Activated CD4-positive, alpha-beta memory T cell treated with anti-CD3 and anti-CD28 coated beads for 36 hours (primary cell): ENCODE measurements at regions of chr18 and their contacts with region 1.

Region 1: GRCh38 chr18:76803814-76804213 is 18.5 kb upstream of the ZNF236 start:
- DNase-seq: peak; percentile 85
- H3K4me3 Mint-ChIP-seq: no peak overlapping the region
- H3K27ac Mint-ChIP-seq: no peak overlapping the region
- H3K4me1 Mint-ChIP-seq: peaks cover 11% of the 10 kb centered on the region
- H3K27me3 Mint-ChIP-seq: peaks cover 7% of the 10 kb centered on the region

Region 2: DNA sequence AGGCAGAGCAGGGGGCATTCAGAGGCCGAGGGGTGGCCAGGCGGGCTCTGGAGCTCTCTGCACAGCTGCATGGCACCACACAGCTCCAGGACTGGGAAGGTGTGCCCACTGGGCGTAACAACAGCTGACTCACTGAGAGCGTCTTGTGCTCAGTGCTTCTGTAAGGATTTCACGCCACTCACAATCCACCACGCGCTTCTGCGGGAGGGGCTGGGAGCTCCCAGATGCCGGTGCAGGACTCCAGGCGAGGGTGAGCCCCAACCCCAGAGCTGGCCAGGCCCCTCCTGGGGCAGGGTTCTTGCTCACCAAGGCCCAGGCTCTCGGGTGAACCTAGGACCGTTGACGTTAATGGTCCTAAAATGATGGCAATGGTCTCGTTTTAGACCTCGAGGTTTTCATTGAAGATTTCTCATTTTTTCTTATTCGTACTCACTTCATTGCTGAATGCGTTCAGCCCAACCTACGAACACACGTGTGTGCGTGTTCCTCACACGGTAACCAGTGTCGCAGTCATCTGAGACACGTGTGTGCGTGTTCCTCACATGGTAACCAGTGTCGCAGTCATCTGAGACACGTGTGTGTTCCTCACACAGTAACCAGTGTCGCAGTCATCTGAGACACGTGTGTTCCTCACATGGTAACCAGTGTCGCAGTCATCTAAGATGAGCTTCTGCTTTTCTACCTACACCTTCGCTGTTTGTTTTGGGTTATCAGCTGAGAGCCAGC is 19.9 kb before region 1 on chr18:
- CTCF ChIA-PET with region 1: interaction called, 23 read pairs
- POLR2A ChIA-PET with region 1: interaction called, 5 read pairs
- intact Hi-C with region 1: no loop called
- DNase-seq: no peak
- H3K4me3 Mint-ChIP-seq: no peak overlapping the region
- H3K27ac Mint-ChIP-seq: no peak overlapping the region
- H3K4me1 Mint-ChIP-seq: peaks cover 5% of the 10 kb centered on the region
- H3K27me3 Mint-ChIP-seq: peaks cover 12% of the 10 kb centered on the region

Region 3: DNA sequence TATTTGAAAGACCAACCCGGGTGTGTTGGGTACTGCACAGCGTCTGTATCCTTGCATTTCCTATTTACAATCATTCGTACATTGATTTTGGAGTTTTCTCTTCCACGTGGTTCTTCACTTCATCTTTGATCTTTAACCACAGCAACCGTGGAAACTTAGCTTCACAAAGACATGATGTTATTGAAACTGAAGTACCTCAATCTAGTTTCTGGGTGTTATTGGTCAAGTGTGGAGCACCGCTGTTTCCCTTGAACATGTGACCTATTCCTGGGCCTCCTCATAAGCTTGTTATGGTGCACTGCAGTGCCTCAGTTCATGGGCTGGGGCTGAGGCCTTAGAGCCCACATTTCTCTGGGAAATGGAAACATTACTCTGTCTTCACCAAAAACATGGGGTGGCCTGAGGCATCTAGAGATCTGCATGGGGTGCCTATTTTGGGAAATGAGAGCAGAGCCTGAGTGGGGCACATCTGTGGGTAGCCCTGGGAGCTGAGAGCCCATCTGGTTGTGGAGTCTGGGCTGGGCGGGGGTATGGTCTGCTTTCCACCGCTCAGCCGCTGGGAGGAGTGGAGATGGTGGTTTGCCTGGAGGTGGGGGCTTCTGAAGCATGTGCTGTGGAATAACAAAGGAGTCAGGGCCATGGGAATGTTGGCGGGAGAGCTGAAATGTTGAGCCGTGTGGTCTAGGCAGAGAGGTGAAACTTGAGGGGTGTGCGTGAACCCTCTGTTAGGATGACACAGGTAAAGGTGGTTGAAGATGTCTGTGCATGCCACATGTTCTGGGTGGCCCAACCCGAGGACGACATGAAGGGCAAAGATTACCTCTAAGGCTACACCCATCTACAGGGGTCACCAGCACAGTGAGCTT is 55.9 kb after region 1 on chr18:
- CTCF ChIA-PET with region 1: interaction called, 16 read pairs
- POLR2A ChIA-PET with region 1: no interaction called
- intact Hi-C with region 1: no loop called
- DNase-seq: peak; percentile 64
- H3K4me3 Mint-ChIP-seq: no peak overlapping the region
- H3K27ac Mint-ChIP-seq: peak overlapping the region; percentile 68
- H3K4me1 Mint-ChIP-seq: peaks cover 20% of the 10 kb centered on the region
- H3K27me3 Mint-ChIP-seq: no peaks in the 10 kb centered on the region

Region 4: DNA sequence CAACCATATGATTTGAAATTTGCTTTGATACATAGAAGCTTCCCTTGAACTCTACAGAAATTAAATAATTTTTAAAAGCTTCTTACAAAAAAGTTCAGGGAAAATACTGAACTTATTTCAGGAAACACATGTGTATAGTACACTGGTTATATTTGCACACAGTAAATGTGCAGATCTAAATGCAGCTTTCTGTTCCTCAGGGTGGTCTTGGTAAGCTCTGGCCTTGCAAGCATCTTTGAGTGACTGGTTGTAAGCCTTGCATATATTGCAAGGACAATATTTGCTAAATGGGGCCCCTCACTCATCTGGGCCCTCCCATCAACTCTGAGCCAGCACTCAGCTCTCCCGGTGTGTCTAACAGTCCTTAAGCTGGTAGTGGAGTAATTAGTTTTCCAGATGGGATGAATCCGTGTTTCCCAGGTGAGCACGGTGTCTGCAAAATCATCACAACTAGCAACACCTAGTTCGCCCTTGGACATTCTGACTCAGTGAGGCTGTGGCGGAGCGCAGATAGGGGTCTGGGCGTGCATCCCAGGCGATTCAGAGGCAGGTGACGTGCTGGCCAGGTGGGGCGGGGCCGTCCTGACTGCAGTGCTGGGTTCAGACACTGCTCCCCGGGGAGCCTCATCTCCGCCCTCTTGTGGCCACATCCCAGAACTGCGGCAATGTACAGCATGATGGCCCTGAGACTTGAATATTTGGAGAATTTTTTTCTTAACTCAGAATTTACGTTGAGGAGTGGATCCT is 179.2 kb after region 1 on chr18:
- CTCF ChIA-PET with region 1: interaction called, 119 read pairs
- POLR2A ChIA-PET with region 1: no interaction called
- intact Hi-C with region 1: loop called (anchors 1 kb)
- DNase-seq: peak; percentile 94
- H3K4me3 Mint-ChIP-seq: no peak overlapping the region
- H3K27ac Mint-ChIP-seq: no peak overlapping the region
- H3K4me1 Mint-ChIP-seq: peaks cover 4% of the 10 kb centered on the region
- H3K27me3 Mint-ChIP-seq: no peaks in the 10 kb centered on the region

Region 5: DNA sequence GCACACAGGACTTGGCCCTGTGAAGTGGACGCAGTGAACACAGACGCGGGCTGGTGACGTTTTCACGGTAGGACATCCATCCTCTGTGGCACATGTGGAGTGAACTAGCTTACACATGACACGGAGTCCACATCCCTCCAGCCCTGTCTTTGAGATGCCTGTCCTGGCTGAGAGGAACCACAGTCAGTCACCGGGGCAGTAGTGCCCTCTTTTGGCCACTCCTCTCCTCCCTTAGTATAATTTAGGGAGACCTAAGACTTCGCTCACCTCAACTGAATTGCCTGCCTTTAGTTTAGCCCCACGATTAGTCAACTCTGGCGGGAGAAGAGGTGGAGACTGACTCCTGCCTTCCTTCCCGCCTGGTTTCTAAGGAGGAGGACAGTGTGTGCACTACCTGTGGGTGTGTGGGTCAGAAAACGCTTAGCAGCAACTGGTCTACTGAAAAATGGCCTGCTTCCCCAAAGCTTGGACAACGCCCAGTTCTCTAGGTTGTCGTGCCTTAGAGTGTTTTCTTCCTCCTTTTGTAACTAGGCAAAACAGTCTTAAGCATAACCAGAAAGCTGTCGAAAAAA is 258.2 kb after region 1 on chr18:
- CTCF ChIA-PET with region 1: interaction called, 4 read pairs
- POLR2A ChIA-PET with region 1: no interaction called
- intact Hi-C with region 1: loop called (anchors 2 kb)
- DNase-seq: peak; percentile 62
- H3K4me3 Mint-ChIP-seq: peak overlapping the region; percentile 58
- H3K27ac Mint-ChIP-seq: peak overlapping the region; percentile 100
- H3K4me1 Mint-ChIP-seq: peaks cover 85% of the 10 kb centered on the region
- H3K27me3 Mint-ChIP-seq: no peaks in the 10 kb centered on the region

Region 6: DNA sequence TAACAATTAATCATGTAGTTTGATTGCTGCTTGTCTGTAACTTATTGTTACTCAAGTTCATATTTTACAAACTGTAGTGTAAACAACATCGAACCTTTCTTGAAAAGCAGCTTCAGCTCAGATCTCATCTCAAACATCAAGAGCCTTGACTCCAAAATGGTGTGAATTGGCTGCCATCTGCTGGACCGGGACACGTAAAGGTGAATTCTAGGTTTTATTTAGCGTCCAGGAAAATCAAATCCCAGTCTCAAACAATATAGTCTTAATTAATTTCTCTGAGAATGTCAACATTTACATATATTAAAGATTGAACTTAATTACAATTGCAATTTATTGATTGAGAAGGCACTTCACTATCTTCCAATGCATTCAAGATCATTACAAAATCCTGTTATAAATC is 898.9 kb after region 1 on chr18:
- CTCF ChIA-PET with region 1: interaction called, 4 read pairs
- POLR2A ChIA-PET with region 1: no interaction called
- intact Hi-C with region 1: loop called (anchors 5 kb)
- DNase-seq: no peak
- H3K4me3 Mint-ChIP-seq: no peak overlapping the region
- H3K27ac Mint-ChIP-seq: no peak overlapping the region
- H3K4me1 Mint-ChIP-seq: no peaks in the 10 kb centered on the region
- H3K27me3 Mint-ChIP-seq: peaks cover 33% of the 10 kb centered on the region